H1 (cell line): ENCODE measurements at regions of chr2 and their contacts with region 1.

Region 1: DNA sequence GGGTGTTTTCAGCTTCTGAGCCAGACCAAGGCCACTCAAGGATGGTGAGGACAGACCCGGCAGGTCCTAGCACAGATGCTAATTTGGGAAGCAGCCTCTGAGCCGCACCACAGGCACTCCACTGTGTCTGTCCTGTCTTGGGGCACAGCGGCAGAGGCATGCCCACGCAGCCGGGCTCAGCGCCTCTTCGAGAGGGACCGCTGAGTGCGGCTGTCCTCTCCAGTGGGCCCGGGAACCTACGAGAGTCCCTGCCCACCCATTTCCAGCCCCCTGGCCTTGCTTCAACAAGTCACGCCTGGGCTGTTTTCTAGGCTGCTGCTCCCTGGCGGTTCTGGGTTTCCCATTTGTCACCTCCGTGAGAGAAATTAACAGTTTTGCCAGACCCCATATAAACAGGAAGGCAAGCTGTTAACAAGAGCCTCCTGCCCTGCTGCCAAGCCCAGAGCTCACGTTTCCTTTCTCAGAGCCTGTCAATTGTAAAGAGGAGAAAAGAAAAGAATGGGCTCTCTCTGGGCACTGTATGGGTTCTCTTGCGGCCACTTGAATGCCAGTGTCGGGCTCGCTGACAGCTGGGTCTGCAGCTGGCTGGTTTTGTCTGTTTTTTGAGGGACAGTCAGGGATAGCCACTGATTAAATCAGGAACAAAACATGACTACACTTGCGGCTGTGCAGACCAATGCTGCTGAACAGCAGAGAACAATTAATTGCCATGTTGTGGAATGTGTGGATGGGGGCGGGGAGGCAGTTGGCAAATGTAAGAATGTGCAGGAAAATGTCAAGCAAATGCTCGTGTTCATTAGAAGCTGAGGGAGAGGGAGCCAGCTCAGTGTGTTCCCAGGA is 30.6 kb downstream of the TMEM17 start:
- DNase-seq: no peak
- H3K4me3 ChIP-seq: no peak overlapping the region
- H3K27ac ChIP-seq: 0 out of 2 replicates have a peak overlapping the region, but pooled peaks have one; percentile 11
- H3K4me1 ChIP-seq: peaks cover 7 to 17% (median 11%) of the 10 kb centered on the region in 4 experiments
- H3K27me3 ChIP-seq: no peaks in the 10 kb centered on the region
- CTCF ChIP-seq: no peak
- EP300 ChIP-seq: no peak
- POLR2A ChIP-seq: no peak
- RAD21 ChIP-seq: no peak

Region 2: DNA sequence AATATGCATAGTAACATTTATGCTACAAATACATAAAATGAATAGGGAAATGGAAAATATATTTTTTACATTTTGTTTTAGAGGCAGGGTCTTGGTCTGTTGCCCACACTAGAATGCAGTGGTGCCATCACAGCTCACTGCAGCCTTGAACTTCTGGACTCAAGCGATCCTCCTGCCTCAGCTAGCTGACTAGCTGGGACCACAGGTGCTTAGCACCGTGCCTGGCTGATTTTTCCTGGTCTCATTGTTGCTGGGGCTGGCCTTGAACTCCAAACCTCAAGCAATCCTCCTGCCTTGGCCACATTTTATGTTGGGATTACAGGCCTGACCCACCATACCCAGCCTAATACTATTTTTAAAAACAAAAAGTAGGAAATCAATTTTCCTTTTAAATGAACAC is 970.4 kb before region 1 on chr2:
- CTCF ChIA-PET with region 1: no interaction called
- POLR2A ChIA-PET with region 1: no interaction called
- DNase-seq: no peak
- H3K4me3 ChIP-seq: no peak overlapping the region
- H3K27ac ChIP-seq: no peak overlapping the region
- H3K4me1 ChIP-seq: no peaks in the 10 kb centered on the region
- H3K27me3 ChIP-seq: no peaks in the 10 kb centered on the region
- CTCF ChIP-seq: no peak
- EP300 ChIP-seq: no peak
- POLR2A ChIP-seq: no peak
- RAD21 ChIP-seq: no peak

Region 3: GRCh38 chr2:62489162-62489561 is 13.8 kb after region 1 on chr2:
- CTCF ChIA-PET with region 1: interaction called, 22 read pairs
- POLR2A ChIA-PET with region 1: interaction called, 4 read pairs
- DNase-seq: no peak
- H3K4me3 ChIP-seq: no peak overlapping the region
- H3K27ac ChIP-seq: no peak overlapping the region
- H3K4me1 ChIP-seq: peaks cover 0 to 4% (median 1%) of the 10 kb centered on the region in 4 experiments; a peak in 4 of 7 replicates
- H3K27me3 ChIP-seq: no peaks in the 10 kb centered on the region
- CTCF ChIP-seq: no peak
- EP300 ChIP-seq: no peak
- POLR2A ChIP-seq: no peak
- RAD21 ChIP-seq: no peak

Region 4: GRCh38 chr2:62495761-62496160 is 20.4 kb after region 1 on chr2:
- CTCF ChIA-PET with region 1: interaction called, 11 read pairs
- POLR2A ChIA-PET with region 1: no interaction called
- DNase-seq: no peak
- H3K4me3 ChIP-seq: no peak overlapping the region
- H3K27ac ChIP-seq: no peak overlapping the region
- H3K4me1 ChIP-seq: no peaks in the 10 kb centered on the region
- H3K27me3 ChIP-seq: no peaks in the 10 kb centered on the region
- CTCF ChIP-seq: no peak
- EP300 ChIP-seq: no peak
- POLR2A ChIP-seq: no peak
- RAD21 ChIP-seq: no peak

Region 5: GRCh38 chr2:62774555-62775366 is 299.4 kb after region 1 on chr2:
- CTCF ChIA-PET with region 1: interaction called, 10 read pairs
- POLR2A ChIA-PET with region 1: no interaction called
- DNase-seq: no peak
- H3K4me3 ChIP-seq: no peak overlapping the region
- H3K27ac ChIP-seq: no peak overlapping the region
- H3K4me1 ChIP-seq: peaks cover 0 to 4% (median 2%) of the 10 kb centered on the region in 4 experiments; a peak in 1 of 7 replicates
- H3K27me3 ChIP-seq: no peaks in the 10 kb centered on the region
- CTCF ChIP-seq: peak in 2 of 3 experiments; percentile 18 to 53; a peak in 2 of 4 replicates
- EP300 ChIP-seq: no peak
- POLR2A ChIP-seq: no peak
- RAD21 ChIP-seq: peak; percentile 67 to 83